ENCODE measurements at regions of chr3 and their contacts with region 1.

Region 1: GRCh38 chr3:194315088-194315964 is 35.8 kb downstream of the CPN2 start:
- DNase-seq: peak; percentile 74 to 98 (median 88)

Region 2: GRCh38 chr3:193665370-193665989 is 649.8 kb before region 1 on chr3:
- intact Hi-C with region 1: loop called (anchors 2 kb)
- DNase-seq: no peak

Region 3: DNA sequence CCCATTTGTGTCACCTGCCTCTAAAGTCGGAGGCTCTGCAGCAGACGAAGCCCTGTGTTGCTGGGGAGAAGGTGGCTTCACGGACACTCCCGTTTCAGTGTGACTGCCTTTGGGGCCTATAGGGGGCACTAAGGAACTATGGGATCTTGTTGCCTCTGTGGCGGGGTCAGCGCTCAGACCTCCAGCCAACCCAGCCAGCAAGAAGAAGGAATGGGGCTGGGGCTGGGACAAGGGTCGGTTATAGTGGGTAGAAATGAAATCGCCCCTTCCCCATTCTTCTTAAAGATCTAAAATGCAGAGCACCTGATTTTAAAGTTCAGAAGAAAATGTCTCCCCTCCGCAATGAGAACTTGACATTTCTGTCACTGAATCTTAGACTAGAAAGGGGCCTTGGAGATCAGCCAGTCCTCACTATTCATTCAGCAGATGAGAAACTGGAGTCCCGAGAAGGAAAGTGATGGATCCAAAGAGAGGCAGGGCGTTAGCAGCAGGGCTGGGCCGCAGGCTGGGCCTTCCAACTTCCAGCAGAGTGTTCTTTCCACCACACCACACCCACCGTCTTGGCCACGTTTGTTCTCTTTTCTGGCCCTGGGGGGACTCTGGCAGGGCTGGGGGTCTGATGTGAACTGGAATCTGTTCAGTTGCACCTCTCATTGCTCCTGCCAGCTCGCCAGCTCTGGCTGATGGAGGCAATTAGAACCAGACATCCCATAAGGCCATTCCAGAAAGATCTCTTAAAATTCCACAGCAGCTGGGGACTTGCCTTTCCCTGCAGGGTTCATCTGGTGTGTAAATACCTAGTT is 526.9 kb before region 1 on chr3:
- intact Hi-C with region 1: loop called (anchors 2 kb)
- DNase-seq: peak in 8 of 10 donors; percentile 22 to 89 (median 50)

Region 4: GRCh38 chr3:194070634-194071409 is 244.5 kb before region 1 on chr3:
- intact Hi-C with region 1: loop called (anchors 10 kb)
- DNase-seq: peak; percentile 37 to 94 (median 66)

Region 5: GRCh38 chr3:194269610-194270145 is 45.6 kb before region 1 on chr3:
- intact Hi-C with region 1: loop called (anchors 5 kb)
- DNase-seq: peak in 7 of 10 donors; percentile 27 to 89 (median 62)

Region 6: DNA sequence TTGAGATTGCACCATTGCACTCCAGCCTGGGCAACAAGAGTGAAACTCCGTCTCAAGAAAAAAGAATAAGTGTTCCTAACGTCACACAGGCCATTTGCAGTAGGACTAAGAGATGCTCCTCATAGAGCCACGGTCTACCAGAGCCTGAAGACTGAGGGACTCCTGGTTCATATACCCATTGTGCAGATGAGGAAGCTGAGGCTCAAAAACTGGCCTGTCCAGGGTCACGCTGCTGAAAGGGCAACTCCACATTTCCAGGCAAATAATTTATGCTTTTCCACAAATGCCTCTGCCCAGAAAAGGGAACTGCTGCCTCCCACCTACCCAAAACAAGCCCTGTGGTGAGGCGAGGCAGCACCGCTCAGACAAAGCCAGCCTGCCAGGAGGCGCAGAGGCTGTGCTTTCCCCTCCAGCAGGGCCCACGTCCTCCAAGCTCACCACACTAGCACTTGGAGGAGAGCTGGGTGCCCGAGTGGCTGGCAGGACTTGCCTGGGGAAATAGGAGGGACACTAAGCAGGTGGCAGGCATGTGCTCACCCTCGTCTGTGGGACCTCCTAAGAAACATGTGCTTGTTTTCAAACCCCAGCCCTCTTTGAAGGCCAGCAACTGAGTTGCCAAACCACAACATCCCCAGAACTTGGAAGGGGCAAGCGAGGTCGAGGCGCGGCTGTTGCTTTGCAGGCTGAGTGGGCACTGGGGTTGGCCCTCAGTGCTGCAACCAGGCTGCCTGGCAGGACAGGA is 760.0 kb after region 1 on chr3:
- intact Hi-C with region 1: no loop called
- DNase-seq: peak in 4 of 10 donors; percentile 2 to 66 (median 50)